A549 (cell line): ENCODE measurements at regions of chr5 and their contacts with region 1.

Region 1: DNA sequence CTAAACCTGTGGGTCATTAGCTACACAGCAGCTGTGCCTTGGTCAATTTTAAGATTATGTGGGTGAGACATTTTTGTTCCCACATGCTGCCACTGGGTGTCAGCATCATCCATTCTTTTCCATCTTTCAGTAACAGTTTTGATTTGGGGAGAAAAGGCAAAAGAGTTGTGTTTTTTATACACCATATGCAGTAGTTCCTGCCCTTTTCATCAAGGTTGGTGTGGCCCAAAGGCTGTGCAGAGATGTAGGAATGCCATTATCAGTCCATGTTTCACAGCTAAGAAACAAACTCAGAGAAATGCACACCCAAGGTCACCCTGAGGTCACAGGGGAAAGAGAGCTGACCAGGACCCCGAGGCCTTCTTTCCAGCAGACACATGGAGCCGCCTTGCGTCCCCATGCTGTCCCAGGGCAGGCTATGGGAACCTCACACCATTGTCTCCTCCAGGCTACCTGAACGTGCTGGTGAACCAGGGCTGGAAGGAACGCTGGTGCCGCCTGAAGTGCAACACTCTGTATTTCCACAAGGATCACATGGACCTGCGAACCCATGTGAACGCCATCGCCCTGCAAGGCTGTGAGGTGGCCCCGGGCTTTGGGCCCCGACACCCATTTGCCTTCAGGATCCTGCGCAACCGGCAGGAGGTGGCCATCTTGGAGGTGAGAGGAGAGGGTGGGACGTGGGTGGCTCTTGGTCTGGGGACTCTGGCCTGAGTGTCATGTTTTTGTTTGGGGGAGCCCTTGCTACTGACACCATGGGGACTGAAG is 27.8 kb upstream of the GRPEL2 start:
- DNase-seq: peak; percentile 51 to 69
- ATAC-seq: peak; percentile 55 to 72; a peak in 5 of 6 replicates
- H3K4me3 ChIP-seq: no peak overlapping the region
- H3K27ac ChIP-seq: peak overlapping the region in 1 of 2 experiments; percentile 28; a peak in 1 of 6 replicates
- H3K4me1 ChIP-seq: peaks cover 15% of the 10 kb centered on the region
- CTCF ChIP-seq: peak; percentile 87
- EP300 ChIP-seq: no peak
- POLR2A ChIP-seq: no peak
- RAD21 ChIP-seq: peak; percentile 80 to 87

Region 2: GRCh38 chr5:149298842-149299404 is 18.5 kb before region 1 on chr5:
- CTCF ChIA-PET with region 1: interaction called, 37 read pairs
- POLR2A ChIA-PET with region 1: no interaction called
- DNase-seq: no peak
- ATAC-seq: no peak
- H3K4me3 ChIP-seq: no peak overlapping the region
- H3K27ac ChIP-seq: no peak overlapping the region
- H3K4me1 ChIP-seq: no peaks in the 10 kb centered on the region
- CTCF ChIP-seq: no peak
- EP300 ChIP-seq: no peak
- POLR2A ChIP-seq: no peak
- RAD21 ChIP-seq: no peak

Region 3: DNA sequence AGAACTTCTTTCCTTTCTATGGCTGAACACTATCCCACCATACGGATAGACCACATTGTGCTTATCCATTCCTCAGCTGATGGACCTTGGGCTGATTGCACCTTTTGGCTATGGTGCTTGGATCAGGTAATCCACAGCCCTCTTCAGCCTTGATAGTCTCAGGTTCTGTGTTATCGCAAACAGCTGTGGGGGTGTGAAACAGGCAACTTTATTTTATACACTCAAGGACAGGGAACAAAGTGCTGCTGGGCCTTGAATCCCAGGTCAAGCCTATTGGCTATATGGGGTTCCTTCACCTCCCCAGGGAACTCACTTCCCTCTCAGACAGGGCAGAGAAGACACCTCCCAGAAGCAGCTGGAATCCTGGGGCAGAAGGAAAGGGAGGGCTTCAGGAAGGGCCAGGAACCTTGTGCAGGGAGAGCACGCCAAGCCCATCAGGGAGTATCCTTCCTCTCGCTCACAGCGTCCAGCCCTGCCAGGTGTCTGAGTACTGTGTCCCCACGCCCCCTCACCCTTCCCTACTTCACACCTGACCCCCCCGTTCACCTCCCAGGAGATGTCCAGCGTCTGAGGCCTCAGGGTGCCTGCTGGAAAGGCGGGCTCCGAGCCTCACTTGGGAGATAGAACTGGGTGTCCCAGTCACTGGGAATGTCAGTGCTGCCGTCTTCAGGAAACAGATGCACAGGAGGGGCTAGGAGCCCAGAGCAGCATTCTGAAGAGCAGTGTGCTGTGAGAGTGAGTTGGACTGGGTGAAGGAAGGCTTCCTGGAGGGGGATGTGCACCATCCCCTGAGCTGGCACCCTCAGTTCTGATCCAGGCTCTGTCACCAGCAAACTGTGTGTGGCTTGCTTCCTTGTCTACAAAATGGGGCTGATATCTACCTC is 13.0 kb before region 1 on chr5:
- CTCF ChIA-PET with region 1: interaction called, 37 read pairs
- POLR2A ChIA-PET with region 1: no interaction called
- DNase-seq: no peak
- ATAC-seq: no peak
- H3K4me3 ChIP-seq: no peak overlapping the region
- H3K27ac ChIP-seq: no peak overlapping the region
- H3K4me1 ChIP-seq: no peaks in the 10 kb centered on the region
- CTCF ChIP-seq: no peak
- EP300 ChIP-seq: no peak
- POLR2A ChIP-seq: no peak
- RAD21 ChIP-seq: no peak

Region 4: GRCh38 chr5:149345147-149345875 is 27.8 kb after region 1 on chr5 and contains the start of gene GRPEL2:
- CTCF ChIA-PET with region 1: interaction called, 93 read pairs
- POLR2A ChIA-PET with region 1: interaction called, 19 read pairs
- DNase-seq: peak; percentile 98 to 99
- ATAC-seq: peak; percentile 99 to 100
- H3K4me3 ChIP-seq: peak within 1 kb of the TSS; percentile 94
- H3K27ac ChIP-seq: peak within 1 kb of the TSS; percentile 89 to 93
- H3K4me1 ChIP-seq: peaks cover 23% of the 10 kb centered on the region
- CTCF ChIP-seq: peak; percentile 8; the same call in 1 of the 3 replicates
- EP300 ChIP-seq: no peak
- POLR2A ChIP-seq: peak; percentile 82
- RAD21 ChIP-seq: no peak
- polyA plus RNA-seq, gene GRPEL2: 17.0 and 26.4 TPM in 2 replicates

Region 5: DNA sequence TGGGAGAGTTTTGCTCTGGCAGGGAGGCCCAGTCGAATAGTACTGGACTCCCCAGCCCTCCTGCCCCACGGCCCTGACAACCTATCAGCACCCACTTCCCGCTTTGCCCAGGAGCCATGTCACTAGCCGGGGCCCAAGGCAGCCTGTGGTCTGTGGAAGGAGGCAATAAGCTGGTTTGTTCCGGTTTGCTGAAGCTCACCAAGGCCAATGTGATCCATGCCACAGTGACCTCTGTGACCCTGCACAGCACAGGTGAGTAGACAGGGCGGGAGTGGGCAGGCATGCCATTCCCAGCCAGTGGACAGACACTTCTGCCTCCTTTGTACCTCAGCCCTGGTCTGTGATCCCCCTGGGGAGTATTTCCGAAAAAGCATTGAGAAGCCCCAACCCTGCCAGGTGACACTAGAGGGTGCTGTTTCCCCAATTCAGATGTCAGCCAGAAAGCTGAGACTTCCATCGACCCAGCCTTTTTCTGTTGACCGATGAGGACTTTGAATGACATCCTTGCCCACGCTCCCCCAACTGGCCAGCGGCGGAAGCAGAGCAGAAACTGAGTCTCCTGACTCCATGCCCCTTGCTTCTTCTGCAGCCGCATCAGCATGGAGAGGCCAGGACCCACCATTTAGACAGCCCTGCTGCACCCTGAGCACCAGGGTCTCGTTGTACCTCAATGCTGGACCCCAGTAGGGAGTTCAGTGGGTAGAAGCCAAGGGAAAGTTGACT is 49.9 kb after region 1 on chr5:
- CTCF ChIA-PET with region 1: interaction called, 275 read pairs
- POLR2A ChIA-PET with region 1: no interaction called
- DNase-seq: peak; percentile 82 to 96
- ATAC-seq: peak; percentile 71 to 91
- H3K4me3 ChIP-seq: no peak overlapping the region
- H3K27ac ChIP-seq: no peak overlapping the region
- H3K4me1 ChIP-seq: peaks cover 4% of the 10 kb centered on the region; the same call in 1 of the 3 replicates
- CTCF ChIP-seq: peak; percentile 84
- EP300 ChIP-seq: no peak
- POLR2A ChIP-seq: no peak
- RAD21 ChIP-seq: peak; percentile 69 to 79

Region 6: GRCh38 chr5:149545327-149545726 is 227.9 kb after region 1 on chr5:
- CTCF ChIA-PET with region 1: no interaction called
- POLR2A ChIA-PET with region 1: no interaction called
- DNase-seq: no peak
- ATAC-seq: no peak
- H3K4me3 ChIP-seq: no peak overlapping the region
- H3K27ac ChIP-seq: no peak overlapping the region
- H3K4me1 ChIP-seq: peaks cover 40% of the 10 kb centered on the region
- CTCF ChIP-seq: no peak
- EP300 ChIP-seq: no peak
- POLR2A ChIP-seq: no peak
- RAD21 ChIP-seq: no peak